ENCODE measurements at regions of chr17 and their contacts with region 1.

Region 1: DNA sequence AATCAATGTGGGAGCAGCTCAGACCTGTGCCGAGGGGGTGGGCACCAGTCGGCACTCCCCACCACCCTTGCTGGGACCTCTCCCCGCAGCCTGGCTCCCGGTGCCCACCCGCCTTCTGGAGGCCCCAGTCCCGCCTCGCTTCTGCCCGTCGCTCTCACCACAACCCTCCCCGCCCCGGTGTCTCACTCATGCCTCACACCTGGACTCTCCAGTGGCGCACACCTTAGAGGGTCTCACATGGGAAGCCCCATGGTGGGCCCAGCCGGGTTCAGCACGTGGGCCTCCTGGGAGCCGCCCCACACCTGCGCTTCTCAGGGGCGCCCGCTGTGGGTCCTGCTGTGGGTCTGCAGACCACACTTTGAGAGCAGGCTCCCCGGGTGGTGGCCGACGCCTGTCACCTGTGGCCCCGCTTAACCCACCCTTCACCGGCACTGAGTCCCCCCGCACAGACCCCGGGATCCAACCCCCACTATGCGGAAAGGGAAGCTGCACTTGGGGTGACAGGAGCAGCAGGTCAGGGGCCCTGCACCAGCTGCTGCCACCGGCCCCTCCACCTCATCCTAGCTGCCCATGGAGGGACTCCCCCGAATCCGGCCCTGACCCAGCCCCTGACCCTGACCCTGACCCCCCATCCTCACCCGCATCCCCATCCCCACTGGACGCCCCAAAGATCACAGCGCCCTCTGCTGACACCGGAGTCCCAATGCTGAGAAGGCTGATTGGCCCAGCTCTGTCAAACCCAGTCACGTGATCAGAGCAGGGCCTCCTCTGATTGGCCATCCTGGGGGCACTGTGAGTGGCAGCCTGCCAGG is 27.4 kb upstream of the SLC38A10 start:
- DNase-seq: no peak
- H3K4me3 ChIP-seq: no peak overlapping the region
- H3K27ac ChIP-seq: no peak overlapping the region
- H3K4me1 ChIP-seq: peaks cover 10 to 11% of the 10 kb centered on the region in 2 donors
- H3K27me3 ChIP-seq: no peaks in the 10 kb centered on the region
- CTCF ChIP-seq: no peak
- POLR2A ChIP-seq: no peak

Region 2: DNA sequence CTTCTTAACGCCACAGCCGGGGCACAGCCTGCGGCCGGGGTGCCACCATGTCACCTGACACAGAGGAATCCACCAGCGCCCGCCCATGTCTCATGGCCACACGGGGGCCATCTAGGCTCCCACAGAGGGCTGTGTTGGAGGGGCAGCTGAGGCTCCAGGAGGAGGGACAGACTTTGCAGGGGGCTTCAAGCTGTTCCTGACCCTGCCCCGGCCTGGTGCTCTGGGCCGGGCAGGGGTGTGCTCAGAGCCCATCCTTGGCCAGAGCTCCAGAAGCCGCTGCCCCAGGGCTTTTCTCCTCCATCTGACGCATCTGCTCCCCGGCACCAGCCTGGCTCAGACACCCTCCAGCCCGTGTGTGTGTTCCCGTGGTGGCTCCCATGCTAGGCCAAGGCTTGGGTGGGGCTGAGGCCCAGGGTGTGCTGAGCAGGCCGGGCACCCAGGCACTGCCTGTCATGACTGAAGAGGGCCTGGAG is 19.6 kb before region 1 on chr17:
- intact Hi-C with region 1: loop called (anchors 1 kb)
- DNase-seq: no peak
- H3K4me3 ChIP-seq: no peak overlapping the region
- H3K27ac ChIP-seq: no peak overlapping the region
- H3K4me1 ChIP-seq: no peaks in the 10 kb centered on the region
- H3K27me3 ChIP-seq: no peaks in the 10 kb centered on the region
- CTCF ChIP-seq: no peak
- POLR2A ChIP-seq: no peak

Measured in breast epithelium (tissue), 4 donors.